Naive thymus-derived CD4-positive, alpha-beta T cell (primary cell): ENCODE measurements at regions of chr3 and their contacts with region 1.

Region 1: DNA sequence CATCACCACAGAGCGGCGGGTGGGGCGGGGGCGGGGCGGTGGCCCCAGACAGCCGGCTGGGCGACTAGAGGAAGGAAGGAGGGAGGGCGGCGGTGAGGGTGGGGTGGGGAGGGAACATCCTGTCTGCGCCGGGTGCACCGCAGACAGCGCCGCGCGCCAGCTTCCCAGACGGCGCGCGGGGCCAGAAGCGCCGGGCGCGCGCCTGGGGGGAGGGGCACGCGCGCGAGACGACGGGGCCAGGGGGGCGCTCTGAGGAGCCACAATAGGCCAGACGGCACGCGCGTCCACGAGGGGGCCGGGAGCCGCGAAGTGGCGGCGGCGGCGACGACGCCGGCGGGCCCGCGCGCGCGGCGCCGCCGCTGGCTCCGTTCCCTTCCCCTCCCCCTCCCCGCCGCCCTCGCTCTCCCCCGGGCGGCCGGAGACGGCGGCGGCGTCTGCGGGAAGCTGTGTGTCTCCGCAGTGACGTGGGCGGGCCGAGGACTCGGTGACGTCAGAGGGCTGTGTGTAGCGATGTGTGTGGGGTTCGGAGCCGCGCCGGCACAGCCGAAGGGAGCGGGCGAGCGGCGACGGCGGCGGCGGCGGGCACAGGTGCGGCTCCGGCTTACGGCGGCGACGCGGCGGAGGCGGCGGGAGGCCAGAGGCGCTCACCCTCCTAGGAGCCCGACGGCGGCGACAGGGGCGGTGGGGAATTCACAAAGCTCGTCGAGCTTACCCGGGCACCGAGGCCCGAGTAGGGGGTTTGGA is at the start of gene SKIL:
- DNase-seq: peak; percentile 93 to 98 (median 96)
- ATAC-seq: peak; percentile 84
- H3K4me3 ChIP-seq: peak within 1 kb of the TSS; percentile 63
- H3K4me3 Mint-ChIP-seq: peak within 1 kb of the TSS; percentile 80 to 96 (median 94)
- H3K27ac ChIP-seq: peak within 1 kb of the TSS; percentile 99
- H3K27ac Mint-ChIP-seq: peak within 1 kb of the TSS; percentile 91 to 99 (median 97)
- H3K4me1 ChIP-seq: peaks cover 7 to 13% of the 10 kb centered on the region in 2 donors
- H3K4me1 Mint-ChIP-seq: peaks cover 28 to 68% (median 60%) of the 10 kb centered on the region in 7 donors
- H3K27me3 ChIP-seq: no peaks in the 10 kb centered on the region
- H3K27me3 Mint-ChIP-seq: peaks cover 0 to 26% (median 0%) of the 10 kb centered on the region in 5 donors
- total RNA-seq, gene SKIL: 19.1 to 80.5 (median 40.9) TPM

Region 2: DNA sequence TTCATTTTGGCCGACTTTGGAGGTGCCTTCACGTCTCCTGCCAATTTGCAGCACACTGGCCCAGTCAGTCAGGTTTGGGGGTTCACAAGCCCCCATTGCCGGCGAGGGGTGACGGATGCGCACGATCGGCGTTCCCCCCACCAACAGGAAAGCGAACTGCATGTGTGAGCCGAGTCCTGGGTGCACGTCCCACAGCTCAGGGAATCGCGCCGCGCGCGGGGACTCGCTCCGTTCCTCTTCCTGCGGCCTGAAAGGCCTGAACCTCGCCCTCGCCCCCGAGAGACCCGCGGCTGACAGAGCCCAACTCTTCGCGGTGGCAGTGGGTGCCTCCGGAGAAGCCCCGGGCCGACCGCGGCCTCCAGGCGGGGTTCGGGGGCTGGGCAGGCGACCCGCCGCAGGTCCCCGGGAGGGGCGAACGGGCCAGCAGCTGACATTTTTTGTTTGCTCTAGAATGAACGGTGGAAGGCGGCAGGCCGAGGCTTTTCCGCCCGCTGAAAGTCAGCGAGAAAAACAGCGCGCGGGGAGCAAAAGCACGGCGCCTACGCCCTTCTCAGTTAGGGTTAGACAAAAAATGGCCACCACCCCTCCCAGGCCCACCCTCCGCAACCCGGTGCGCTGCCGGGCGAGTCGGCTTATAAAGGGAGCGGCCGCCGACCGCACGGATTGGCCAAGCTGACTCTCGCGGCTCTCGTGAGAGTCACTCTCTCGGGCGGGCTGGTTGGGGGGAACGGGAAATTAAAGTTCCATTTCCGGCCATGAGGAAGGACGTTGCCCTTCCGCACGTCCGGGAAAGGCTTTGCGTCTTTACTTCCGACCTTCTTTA is 592.7 kb before region 1 on chr3 and contains the start of gene TERC:
- CTCF ChIA-PET with region 1: interaction called, 3 read pairs
- POLR2A ChIA-PET with region 1: interaction called, 7 read pairs
- intact Hi-C with region 1: loop called (anchors 1 to 2 kb)
- DNase-seq: peak; percentile 72 to 96 (median 94)
- ATAC-seq: peak; percentile 91
- H3K4me3 ChIP-seq: peak within 1 kb of the TSS; percentile 88
- H3K4me3 Mint-ChIP-seq: peak within 1 kb of the TSS; percentile 89 to 99 (median 98)
- H3K27ac ChIP-seq: peak within 1 kb of the TSS; percentile 98
- H3K27ac Mint-ChIP-seq: peak within 1 kb of the TSS; percentile 96 to 100 (median 99)
- H3K4me1 ChIP-seq: peaks cover 11 to 18% of the 10 kb centered on the region in 2 donors
- H3K4me1 Mint-ChIP-seq: peaks cover 6 to 39% (median 33%) of the 10 kb centered on the region in 7 donors
- H3K27me3 ChIP-seq: no peaks in the 10 kb centered on the region
- H3K27me3 Mint-ChIP-seq: no peaks in the 10 kb centered on the region
- total RNA-seq, gene TERC: 4.0 to 19.4 (median 7.4) TPM

Region 3: DNA sequence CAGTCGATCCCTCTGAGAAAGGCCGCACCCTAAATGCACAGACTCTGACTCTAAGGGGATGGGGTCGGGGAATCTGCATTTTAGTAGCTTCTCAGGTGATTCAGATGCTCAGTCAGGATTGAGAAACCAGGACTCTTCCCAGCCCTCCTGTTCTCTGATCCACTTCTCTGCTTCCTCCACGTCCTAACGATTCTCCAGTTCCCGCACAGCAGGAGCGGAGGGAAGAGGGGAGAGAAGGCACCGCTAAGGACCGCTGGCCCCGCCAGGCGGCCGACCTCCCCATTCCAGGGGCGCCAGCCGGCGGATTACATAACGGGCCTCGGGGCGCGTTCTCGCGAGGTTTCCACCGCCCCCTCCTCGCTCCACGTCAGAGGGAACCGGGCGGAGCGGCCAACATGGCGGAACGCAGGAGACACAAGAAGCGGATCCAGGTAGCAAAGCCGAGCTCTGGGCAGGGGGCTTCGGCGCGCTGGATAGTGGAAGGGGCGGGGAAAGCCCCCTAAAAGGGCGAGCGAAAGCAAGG is 390.9 kb before region 1 on chr3 and contains the start of gene SEC62:
- CTCF ChIA-PET with region 1: no interaction called
- POLR2A ChIA-PET with region 1: interaction called, 3 read pairs
- intact Hi-C with region 1: loop called (anchors 1 to 2 kb)
- DNase-seq: peak; percentile 92 to 97 (median 96)
- ATAC-seq: peak; percentile 95
- H3K4me3 ChIP-seq: peak within 1 kb of the TSS; percentile 80
- H3K4me3 Mint-ChIP-seq: peak within 1 kb of the TSS; percentile 83 to 98 (median 96)
- H3K27ac ChIP-seq: peak within 1 kb of the TSS; percentile 95
- H3K27ac Mint-ChIP-seq: peak within 1 kb of the TSS; percentile 95 to 99 (median 99)
- H3K4me1 ChIP-seq: peaks cover 22 to 36% of the 10 kb centered on the region in 2 donors
- H3K4me1 Mint-ChIP-seq: peaks cover 37 to 81% (median 69%) of the 10 kb centered on the region in 7 donors
- H3K27me3 ChIP-seq: no peaks in the 10 kb centered on the region
- H3K27me3 Mint-ChIP-seq: peaks cover 0 to 2% (median 0%) of the 10 kb centered on the region in 5 donors
- total RNA-seq, gene SEC62: 75.2 to 156 (median 110) TPM

Region 4: DNA sequence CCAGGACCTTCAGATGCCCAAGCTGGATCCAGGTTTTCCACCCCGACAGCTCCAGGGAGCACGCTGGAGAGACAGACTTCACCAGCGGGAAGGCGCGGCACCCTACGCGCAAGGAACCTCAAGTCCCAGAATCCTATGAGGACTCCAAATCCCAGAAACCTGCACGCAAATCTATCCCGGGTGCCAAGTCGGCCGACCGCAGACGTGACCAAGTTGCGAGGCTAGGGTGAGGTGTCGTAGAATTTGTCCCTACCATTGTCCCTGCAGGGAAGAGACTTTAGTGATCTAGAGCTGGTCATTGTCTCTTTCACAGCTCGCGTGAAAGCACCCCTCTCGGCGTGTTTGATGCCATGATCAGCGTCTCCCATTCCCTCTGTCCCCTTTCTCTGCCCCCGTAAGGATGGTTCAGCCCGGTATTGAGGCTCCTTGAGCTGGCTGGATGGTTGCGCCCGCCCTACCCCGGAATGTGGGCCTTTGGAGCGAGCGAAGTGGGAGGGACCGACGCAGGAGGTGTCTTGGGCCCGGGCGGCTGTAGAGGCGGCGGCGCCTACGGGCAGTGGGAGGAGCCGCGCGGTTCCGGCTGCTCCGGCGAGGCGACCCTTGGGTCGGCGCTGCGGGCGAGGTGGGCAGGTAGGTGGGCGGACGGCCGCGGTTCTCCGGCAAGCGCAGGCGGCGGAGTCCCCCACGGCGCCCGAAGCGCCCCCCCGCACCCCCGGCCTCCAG is 135.3 kb before region 1 on chr3 and contains the start of gene PRKCI:
- CTCF ChIA-PET with region 1: no interaction called
- POLR2A ChIA-PET with region 1: interaction called, 3 read pairs
- intact Hi-C with region 1: loop called (anchors 1 kb)
- DNase-seq: peak; percentile 63 to 88 (median 83)
- ATAC-seq: peak; percentile 96
- H3K4me3 ChIP-seq: peak within 1 kb of the TSS; percentile 98
- H3K4me3 Mint-ChIP-seq: peak within 1 kb of the TSS; percentile 75 to 97 (median 95)
- H3K27ac ChIP-seq: peak within 1 kb of the TSS; percentile 75
- H3K27ac Mint-ChIP-seq: peak within 1 kb of the TSS; percentile 82 to 97 (median 95)
- H3K4me1 ChIP-seq: peaks cover 0 to 3% of the 10 kb centered on the region in 2 donors
- H3K4me1 Mint-ChIP-seq: peaks cover 15 to 50% (median 38%) of the 10 kb centered on the region in 7 donors
- H3K27me3 ChIP-seq: no peaks in the 10 kb centered on the region
- H3K27me3 Mint-ChIP-seq: peaks cover 0 to 4% (median 0%) of the 10 kb centered on the region in 5 donors
- total RNA-seq, gene PRKCI: 14.7 to 26.2 (median 20.5) TPM

Region 5: GRCh38 chr3:170321321-170322034 is 35.9 kb before region 1 on chr3:
- CTCF ChIA-PET with region 1: no interaction called
- POLR2A ChIA-PET with region 1: no interaction called
- intact Hi-C with region 1: no loop called
- DNase-seq: no peak
- ATAC-seq: no peak
- H3K4me3 ChIP-seq: no peak overlapping the region
- H3K4me3 Mint-ChIP-seq: no peak overlapping the region
- H3K27ac ChIP-seq: no peak overlapping the region
- H3K27ac Mint-ChIP-seq: peak overlapping the region in 2 of 9 donors; percentile 17 to 36
- H3K4me1 ChIP-seq: no peaks in the 10 kb centered on the region
- H3K4me1 Mint-ChIP-seq: peaks cover 0 to 2% (median 0%) of the 10 kb centered on the region in 7 donors
- H3K27me3 ChIP-seq: no peaks in the 10 kb centered on the region
- H3K27me3 Mint-ChIP-seq: peaks cover 0 to 16% (median 0%) of the 10 kb centered on the region in 5 donors

Region 6: GRCh38 chr3:170368921-170369320 is 11.6 kb after region 1 on chr3:
- CTCF ChIA-PET with region 1: interaction called, 3 read pairs
- POLR2A ChIA-PET with region 1: interaction called, 7 read pairs
- intact Hi-C with region 1: loop called in 1 of 2 experiments (anchors 1 kb)
- DNase-seq: no peak
- ATAC-seq: peak; percentile 27
- H3K4me3 ChIP-seq: no peak overlapping the region
- H3K4me3 Mint-ChIP-seq: no peak overlapping the region
- H3K27ac ChIP-seq: no peak overlapping the region
- H3K27ac Mint-ChIP-seq: no peak overlapping the region
- H3K4me1 ChIP-seq: peaks cover 0 to 6% of the 10 kb centered on the region in 2 donors
- H3K4me1 Mint-ChIP-seq: peaks cover 9 to 59% (median 47%) of the 10 kb centered on the region in 7 donors
- H3K27me3 ChIP-seq: no peaks in the 10 kb centered on the region
- H3K27me3 Mint-ChIP-seq: no peaks in the 10 kb centered on the region

Region 7: DNA sequence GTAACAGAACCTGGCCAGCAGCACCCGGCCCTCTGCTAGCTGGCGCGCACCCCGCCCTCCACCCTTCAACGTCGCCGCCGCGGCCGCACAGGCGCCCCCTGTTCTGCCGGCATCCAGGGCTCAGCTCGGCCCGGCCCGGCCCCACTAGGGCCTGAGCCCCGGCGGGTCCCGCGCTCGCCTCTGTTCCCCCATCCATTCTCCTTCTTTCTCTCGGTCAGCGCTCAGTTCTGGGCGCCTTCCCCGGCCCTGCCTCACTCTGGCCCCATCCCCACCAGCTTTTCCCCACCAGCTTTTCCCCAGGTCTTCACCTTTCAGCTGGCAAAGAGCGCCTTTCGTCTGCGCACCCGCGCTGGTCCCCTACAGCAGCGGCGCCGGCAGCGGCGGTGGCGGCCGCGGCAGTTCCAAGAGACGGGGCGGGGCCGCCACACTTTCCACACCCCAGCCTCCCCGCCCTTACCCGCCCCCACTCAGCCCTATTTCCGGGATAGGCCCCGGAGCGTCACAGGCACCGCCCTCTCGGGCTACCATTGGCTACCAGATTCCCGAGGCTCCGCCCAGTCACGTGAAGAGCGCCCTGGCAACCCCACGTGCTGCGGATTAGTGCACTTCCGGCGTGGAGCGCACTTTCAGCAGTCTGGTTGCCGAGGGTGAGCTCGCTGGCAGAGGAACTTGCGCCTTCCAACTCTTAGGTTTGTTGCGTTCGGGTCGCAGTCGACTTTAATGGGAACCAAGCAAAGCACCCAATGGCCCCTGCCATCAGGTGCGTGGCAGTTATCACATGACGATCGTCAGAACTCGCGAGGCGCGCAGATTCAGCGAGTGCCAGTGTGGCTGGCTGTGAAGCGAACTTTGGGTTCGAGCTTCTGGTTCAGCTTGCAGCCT is 551.1 kb after region 1 on chr3 and contains the start of gene EIF5A2:
- CTCF ChIA-PET with region 1: no interaction called
- POLR2A ChIA-PET with region 1: no interaction called
- intact Hi-C with region 1: loop called (anchors 1 kb)
- DNase-seq: peak; percentile 87 to 97 (median 94)
- ATAC-seq: peak; percentile 98
- H3K4me3 ChIP-seq: peak within 1 kb of the TSS; percentile 50
- H3K4me3 Mint-ChIP-seq: peak within 1 kb of the TSS; percentile 90 to 98 (median 96)
- H3K27ac ChIP-seq: peak within 1 kb of the TSS; percentile 68
- H3K27ac Mint-ChIP-seq: peak within 1 kb of the TSS; percentile 89 to 96 (median 94)
- H3K4me1 ChIP-seq: peaks cover 15 to 16% of the 10 kb centered on the region in 2 donors
- H3K4me1 Mint-ChIP-seq: peaks cover 0 to 31% (median 22%) of the 10 kb centered on the region in 7 donors
- H3K27me3 ChIP-seq: no peaks in the 10 kb centered on the region
- H3K27me3 Mint-ChIP-seq: peaks cover 0 to 19% (median 0%) of the 10 kb centered on the region in 5 donors
- total RNA-seq, gene EIF5A2: 5.5 to 9.8 (median 7.4) TPM